GM23248 (cell line): ENCODE measurements at regions of chr5 and their contacts with region 1.

Region 1: GRCh38 chr5:110625376-110625999 is 101.0 kb downstream of the TMEM232 start:
- DNase-seq: peak; percentile 79
- H3K4me3 ChIP-seq: no peak overlapping the region
- H3K27ac ChIP-seq: no peak overlapping the region
- H3K4me1 ChIP-seq: peaks cover 12% of the 10 kb centered on the region; the same call in 1 of the 2 replicates
- H3K27me3 ChIP-seq: no peaks in the 10 kb centered on the region

Region 2: DNA sequence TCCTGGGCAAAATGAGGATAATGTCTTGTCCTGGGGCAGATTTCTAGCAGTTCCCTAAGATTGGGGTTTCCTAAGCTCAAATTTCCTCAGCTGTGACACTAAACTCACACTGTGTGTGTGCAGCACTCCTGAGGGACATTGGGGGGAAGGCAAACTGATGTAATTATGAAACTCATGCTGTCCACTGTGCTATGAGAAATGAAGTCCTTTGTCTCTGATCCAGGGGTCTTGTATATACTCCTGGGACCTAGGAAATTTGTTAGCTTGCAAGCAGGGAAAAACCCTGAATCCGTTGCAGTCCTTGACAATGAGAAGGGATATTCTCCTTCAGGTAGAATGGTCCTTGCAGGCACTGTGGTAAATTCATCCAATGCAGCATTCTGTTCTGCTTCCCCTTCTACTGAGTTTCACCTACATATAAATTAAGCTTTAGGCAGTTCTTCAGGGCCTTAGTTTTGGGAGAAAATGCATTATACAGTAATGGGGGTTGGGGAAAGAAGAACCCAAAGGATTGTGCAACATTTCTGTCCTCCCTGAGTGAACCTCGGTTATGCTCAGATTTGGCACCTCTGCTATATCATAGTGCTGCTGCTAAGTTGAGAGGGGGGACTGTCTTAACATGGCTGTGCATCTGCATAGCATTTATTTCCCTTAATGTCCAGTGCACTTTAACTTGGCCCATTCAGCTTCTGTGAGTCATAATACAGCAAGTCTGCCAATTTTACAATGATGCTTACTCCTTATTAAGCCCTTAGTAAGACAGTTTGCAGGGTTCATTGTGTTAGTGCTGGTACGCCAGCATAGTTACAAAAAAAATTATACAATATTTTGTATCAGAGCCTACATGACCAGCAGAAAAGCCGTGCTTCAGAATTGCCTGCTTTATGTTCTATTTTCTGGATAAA is 1295.9 kb before region 1 on chr5:
- in situ Hi-C with region 1: no loop called
- DNase-seq: peak; percentile 87
- H3K4me3 ChIP-seq: no peak overlapping the region
- H3K27ac ChIP-seq: peak overlapping the region; percentile 50
- H3K4me1 ChIP-seq: peaks cover 25% of the 10 kb centered on the region
- H3K27me3 ChIP-seq: no peaks in the 10 kb centered on the region

Region 3: DNA sequence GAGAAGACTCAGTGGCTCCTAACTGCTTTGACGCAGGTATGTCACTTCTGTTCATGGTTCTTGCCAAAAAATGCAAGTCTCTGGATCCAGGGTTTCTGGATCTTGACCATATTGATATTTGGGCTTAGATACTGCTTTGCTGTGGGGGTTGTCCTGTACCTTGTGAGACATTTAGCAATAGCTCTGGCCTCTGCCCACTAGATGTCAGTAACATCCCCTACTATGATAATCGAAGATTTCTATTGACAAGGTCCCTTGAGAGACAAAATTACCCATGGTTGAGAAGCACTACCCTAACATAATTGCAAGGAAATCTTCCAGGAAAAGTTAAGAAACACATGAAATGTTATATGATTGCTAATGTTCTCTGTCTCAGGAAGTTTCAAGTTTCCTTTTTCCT is 184.5 kb before region 1 on chr5:
- in situ Hi-C with region 1: loop called (anchors 10 kb)
- DNase-seq: peak; percentile 66
- H3K4me3 ChIP-seq: no peak overlapping the region
- H3K27ac ChIP-seq: no peak overlapping the region
- H3K4me1 ChIP-seq: peaks cover 4% of the 10 kb centered on the region; the same call in 1 of the 2 replicates
- H3K27me3 ChIP-seq: no peaks in the 10 kb centered on the region

Region 4: GRCh38 chr5:111478266-111478665 is 852.8 kb after region 1 on chr5:
- in situ Hi-C with region 1: no loop called
- DNase-seq: peak; percentile 27
- H3K4me3 ChIP-seq: no peak overlapping the region
- H3K27ac ChIP-seq: no peak overlapping the region
- H3K4me1 ChIP-seq: no peaks in the 10 kb centered on the region
- H3K27me3 ChIP-seq: no peaks in the 10 kb centered on the region